CD4-positive, alpha-beta memory T cell (primary cell): ENCODE measurements at regions of chr17 and their contacts with region 1.

Region 1: DNA sequence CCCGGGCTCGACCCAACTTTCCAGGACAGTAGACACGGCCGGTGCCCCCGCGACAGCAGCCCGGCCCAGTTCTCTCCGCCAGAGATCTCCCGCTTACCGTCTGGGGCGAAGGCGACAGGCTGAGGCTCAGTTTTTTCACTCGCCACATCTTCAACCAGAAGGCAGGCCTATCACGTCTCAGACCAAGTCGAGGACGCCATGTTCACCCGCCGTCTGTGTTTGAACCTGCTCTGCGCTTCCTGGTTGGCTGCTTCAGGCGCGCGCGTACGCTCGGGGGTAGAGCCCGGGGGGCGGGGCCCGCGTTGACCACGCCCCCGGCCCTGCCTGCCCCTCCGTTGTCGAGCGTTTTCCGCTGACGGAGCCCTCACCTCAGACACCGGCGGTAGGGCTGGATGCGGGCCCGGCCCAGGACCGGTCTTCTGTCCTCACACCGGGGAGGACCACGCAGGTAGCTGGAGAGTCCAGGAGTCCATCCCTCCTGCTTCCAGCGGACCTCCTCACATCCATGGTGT is at the start of gene SPAG5:
- DNase-seq: peak; percentile 95 to 96 (median 96)
- H3K4me3 ChIP-seq: peak within 1 kb of the TSS; percentile 74 to 95
- H3K4me3 Mint-ChIP-seq: peak within 1 kb of the TSS; percentile 88 to 99 (median 96)
- H3K27ac ChIP-seq: peak within 1 kb of the TSS; percentile 100
- H3K27ac Mint-ChIP-seq: peak within 1 kb of the TSS; percentile 94 to 99 (median 99)
- H3K4me1 ChIP-seq: peaks cover 7% of the 10 kb centered on the region
- H3K4me1 Mint-ChIP-seq: peaks cover 13 to 27% (median 22%) of the 10 kb centered on the region in 4 donors
- H3K27me3 ChIP-seq: no peaks in the 10 kb centered on the region
- H3K27me3 Mint-ChIP-seq: no peaks in the 10 kb centered on the region
- total RNA-seq, gene SPAG5: 9.2 to 10.2 TPM

Region 2: GRCh38 chr17:28552246-28552999 is 46.4 kb before region 1 on chr17 and contains the start of gene UNC119:
- CTCF ChIA-PET with region 1: interaction called, 12 read pairs
- POLR2A ChIA-PET with region 1: interaction called, 43 read pairs
- intact Hi-C with region 1: loop called (anchors 1 kb)
- DNase-seq: peak; percentile 74 to 79 (median 75)
- H3K4me3 ChIP-seq: peak within 1 kb of the TSS; percentile 29 to 66
- H3K4me3 Mint-ChIP-seq: peak within 1 kb of the TSS; percentile 89 to 98 (median 92)
- H3K27ac ChIP-seq: peak within 1 kb of the TSS; percentile 84
- H3K27ac Mint-ChIP-seq: peak within 1 kb of the TSS; percentile 94 to 98 (median 96)
- H3K4me1 ChIP-seq: peaks cover 48% of the 10 kb centered on the region
- H3K4me1 Mint-ChIP-seq: peaks cover 41 to 55% (median 48%) of the 10 kb centered on the region in 4 donors
- H3K27me3 ChIP-seq: no peaks in the 10 kb centered on the region
- H3K27me3 Mint-ChIP-seq: no peaks in the 10 kb centered on the region
- total RNA-seq, gene UNC119: 38.8 to 39.6 TPM

Region 3: DNA sequence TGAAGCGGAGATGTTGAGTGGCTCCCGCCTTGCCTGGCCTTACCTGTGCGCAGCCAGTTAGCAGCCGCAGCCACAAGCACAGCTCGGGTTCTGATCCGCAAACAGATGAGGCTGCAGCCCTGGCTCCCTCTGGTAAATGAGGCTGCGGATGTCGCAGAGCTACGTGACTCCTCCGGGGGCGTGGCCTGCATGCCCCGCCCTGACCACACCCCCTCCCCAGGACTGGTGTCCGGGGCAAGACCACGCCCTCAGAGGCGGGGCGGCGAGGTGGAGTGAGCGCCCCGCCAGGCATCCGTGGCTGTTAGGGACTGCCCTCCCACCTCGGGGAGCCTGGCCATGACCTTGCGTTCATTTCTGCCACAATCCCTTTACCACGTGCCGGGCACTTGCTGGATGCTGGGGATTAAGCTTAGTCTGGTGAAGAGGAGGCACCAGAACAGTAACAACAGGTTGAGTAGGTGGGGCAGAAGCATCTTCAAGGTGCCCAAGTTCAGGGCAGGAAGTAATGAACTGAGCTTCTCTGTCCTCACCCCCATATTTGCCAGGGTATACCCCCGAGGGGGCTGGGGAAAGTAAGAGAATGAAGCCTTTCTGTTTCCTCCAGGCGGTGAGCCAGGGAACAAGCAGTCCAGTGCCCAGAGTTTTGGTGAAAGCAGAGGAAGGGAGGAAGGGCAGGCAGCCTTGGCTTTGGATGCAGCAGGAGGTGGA is 21.9 kb before region 1 on chr17 and contains the start of gene ALDOC:
- CTCF ChIA-PET with region 1: interaction called, 3 read pairs
- POLR2A ChIA-PET with region 1: interaction called, 169 read pairs
- intact Hi-C with region 1: loop called (anchors 1 kb)
- DNase-seq: peak; percentile 97 to 98 (median 98)
- H3K4me3 ChIP-seq: peak within 1 kb of the TSS; percentile 20 to 51
- H3K4me3 Mint-ChIP-seq: peak within 1 kb of the TSS; percentile 81 to 89 (median 84)
- H3K27ac ChIP-seq: peak within 1 kb of the TSS; percentile 59
- H3K27ac Mint-ChIP-seq: peak within 1 kb of the TSS; percentile 79 to 92 (median 90)
- H3K4me1 ChIP-seq: peaks cover 35% of the 10 kb centered on the region
- H3K4me1 Mint-ChIP-seq: peaks cover 23 to 45% (median 30%) of the 10 kb centered on the region in 4 donors
- H3K27me3 ChIP-seq: no peaks in the 10 kb centered on the region
- H3K27me3 Mint-ChIP-seq: no peaks in the 10 kb centered on the region
- total RNA-seq, gene ALDOC: 30.1 to 33.7 TPM

Region 4: DNA sequence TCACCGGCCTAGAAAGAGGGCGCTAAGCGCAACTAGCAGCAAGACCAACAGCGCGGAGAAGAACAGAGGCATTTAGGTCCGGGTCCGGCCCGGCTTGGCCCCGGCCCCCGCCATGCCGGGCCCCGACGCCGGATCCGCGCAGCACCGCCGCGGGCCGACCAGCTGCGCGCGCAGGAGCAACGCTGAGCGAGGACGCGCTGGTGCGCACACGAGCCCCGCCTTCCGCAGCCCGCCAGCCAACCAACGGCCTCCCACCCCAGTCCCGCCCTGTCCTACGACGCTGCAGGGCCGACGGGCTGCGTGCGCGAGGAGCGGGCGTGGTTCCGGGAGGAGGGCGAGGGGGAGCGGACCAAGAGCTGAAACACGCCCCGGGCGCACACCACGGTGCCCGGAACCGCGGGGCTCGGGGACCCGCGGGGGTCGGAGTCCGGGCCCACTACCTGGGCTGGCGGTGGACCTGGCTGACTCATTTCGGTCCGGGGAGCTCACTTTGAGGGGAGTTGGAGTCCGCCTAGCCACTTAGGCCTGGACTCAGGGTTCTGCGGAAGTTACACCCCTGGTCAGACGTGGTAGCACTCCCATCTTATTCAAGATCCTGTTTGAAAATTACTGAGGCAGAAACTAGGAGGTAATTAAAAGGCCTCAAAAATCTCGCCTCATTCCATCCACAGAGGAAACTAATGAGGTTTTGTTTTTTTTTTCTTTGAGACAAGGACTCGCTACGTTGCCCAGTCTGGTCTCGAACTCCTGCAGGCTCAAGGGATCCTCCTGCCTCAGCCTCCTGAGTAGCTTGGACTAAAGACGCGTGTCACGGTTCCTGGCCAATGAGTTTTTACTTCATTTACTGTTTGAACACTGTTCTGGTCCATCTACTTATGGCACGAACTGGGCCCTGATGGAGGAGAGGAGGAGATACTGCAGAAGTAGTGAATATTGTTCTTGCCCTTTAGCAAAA is 46.4 kb after region 1 on chr17 and contains the start of gene BLTP2:
- CTCF ChIA-PET with region 1: interaction called, 5 read pairs
- POLR2A ChIA-PET with region 1: interaction called, 26 read pairs
- intact Hi-C with region 1: loop called (anchors 2 kb)
- DNase-seq: peak; percentile 93 to 95 (median 94)
- H3K4me3 ChIP-seq: peak within 1 kb of the TSS; percentile 45 to 98
- H3K4me3 Mint-ChIP-seq: peak within 1 kb of the TSS; percentile 86 to 96 (median 92)
- H3K27ac ChIP-seq: peak within 1 kb of the TSS; percentile 91
- H3K27ac Mint-ChIP-seq: peak within 1 kb of the TSS; percentile 93 to 99 (median 98)
- H3K4me1 ChIP-seq: peaks cover 47% of the 10 kb centered on the region
- H3K4me1 Mint-ChIP-seq: peaks cover 31 to 45% (median 37%) of the 10 kb centered on the region in 4 donors
- H3K27me3 ChIP-seq: no peaks in the 10 kb centered on the region
- H3K27me3 Mint-ChIP-seq: no peaks in the 10 kb centered on the region
- total RNA-seq, gene BLTP2: 132 to 149 TPM

Region 5: GRCh38 chr17:28717578-28718333 is 118.9 kb after region 1 on chr17 and contains the start of gene RAB34:
- CTCF ChIA-PET with region 1: no interaction called
- POLR2A ChIA-PET with region 1: interaction called, 11 read pairs
- intact Hi-C with region 1: no loop called
- DNase-seq: no peak
- H3K4me3 ChIP-seq: no peak within 1 kb of the TSS
- H3K4me3 Mint-ChIP-seq: peak within 1 kb of the TSS; percentile 49 to 71 (median 53)
- H3K27ac ChIP-seq: no peak within 1 kb of the TSS
- H3K27ac Mint-ChIP-seq: peak within 1 kb of the TSS in 5 of 7 donors; percentile 52 to 96 (median 74)
- H3K4me1 ChIP-seq: peaks cover 38% of the 10 kb centered on the region
- H3K4me1 Mint-ChIP-seq: peaks cover 24 to 46% (median 35%) of the 10 kb centered on the region in 4 donors
- H3K27me3 ChIP-seq: peaks cover 11% of the 10 kb centered on the region
- H3K27me3 Mint-ChIP-seq: peaks cover 9 to 18% of the 10 kb centered on the region in 2 donors
- total RNA-seq, gene RAB34: 4.0 to 6.3 TPM